Activated CD8-positive, alpha-beta T cell treated with anti-CD3 and anti-CD28 coated beads for 36 hours (primary cell): ENCODE measurements at regions of chrX and their contacts with region 1.

Region 1: DNA sequence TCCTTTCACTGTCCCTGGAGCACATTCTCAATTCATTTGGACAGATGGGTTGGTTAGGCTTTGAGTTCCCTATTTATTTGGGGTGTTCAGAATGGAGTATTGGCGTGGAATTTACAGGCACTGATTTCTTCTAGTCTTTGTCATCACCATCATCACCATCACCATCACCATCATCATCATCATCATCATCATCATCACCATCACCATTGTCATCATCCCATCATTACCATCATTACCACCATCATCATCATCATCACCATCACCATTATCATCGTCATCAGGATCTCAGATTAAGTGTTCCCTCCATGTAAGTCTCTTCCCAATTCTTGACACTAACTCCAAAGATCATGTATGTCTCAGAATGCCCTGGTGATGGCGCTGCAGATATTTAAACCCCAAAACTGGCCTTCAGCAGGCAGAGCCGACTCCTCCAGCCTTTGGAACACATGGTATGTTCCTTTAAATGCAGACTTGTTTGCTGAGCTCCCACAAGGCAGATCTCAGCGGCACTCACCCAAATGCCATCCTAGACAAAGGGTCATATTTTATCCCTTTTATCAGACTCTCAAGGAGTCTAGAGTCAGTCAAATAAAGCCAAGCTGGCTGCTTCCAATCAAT is 19.8 kb upstream of the FAM9A start:
- DNase-seq: peak; percentile 9
- ATAC-seq: no peak
- H3K4me3 Mint-ChIP-seq: no peak overlapping the region
- H3K27ac Mint-ChIP-seq: no peak overlapping the region
- H3K4me1 Mint-ChIP-seq: no peaks in the 10 kb centered on the region
- H3K27me3 Mint-ChIP-seq: peaks cover 2% of the 10 kb centered on the region
- CTCF ChIP-seq: no peak

Region 2: DNA sequence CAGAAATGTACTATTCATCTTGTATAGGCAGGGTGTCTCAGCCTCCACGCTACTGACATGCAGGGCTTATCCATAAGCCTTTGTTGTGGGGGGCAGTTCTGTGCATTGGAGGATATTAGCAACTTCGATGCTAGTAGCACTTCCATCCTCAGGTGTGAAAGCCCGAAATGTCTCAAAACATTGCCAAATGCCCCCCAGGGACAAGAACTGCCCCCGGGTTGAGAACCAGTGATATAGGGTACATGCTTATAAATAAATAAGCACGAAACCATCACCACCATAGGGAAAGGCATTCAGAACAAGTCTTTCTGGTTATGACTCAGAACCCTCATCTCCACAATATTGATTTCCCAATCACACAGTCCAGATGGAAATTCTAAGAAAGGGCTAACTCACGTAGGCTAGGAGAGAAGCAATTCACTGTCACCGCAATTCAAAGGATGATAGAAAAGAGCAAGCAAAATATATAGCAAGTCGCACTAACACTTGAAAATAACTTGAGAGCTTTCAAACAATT is 173.9 kb before region 1 on chrX:
- CTCF ChIA-PET with region 1: no interaction called
- POLR2A ChIA-PET with region 1: no interaction called
- intact Hi-C with region 1: no loop called
- DNase-seq: no peak
- ATAC-seq: no peak
- H3K4me3 Mint-ChIP-seq: no peak overlapping the region
- H3K27ac Mint-ChIP-seq: no peak overlapping the region
- H3K4me1 Mint-ChIP-seq: no peaks in the 10 kb centered on the region
- H3K27me3 Mint-ChIP-seq: no peaks in the 10 kb centered on the region
- CTCF ChIP-seq: no peak

Region 3: DNA sequence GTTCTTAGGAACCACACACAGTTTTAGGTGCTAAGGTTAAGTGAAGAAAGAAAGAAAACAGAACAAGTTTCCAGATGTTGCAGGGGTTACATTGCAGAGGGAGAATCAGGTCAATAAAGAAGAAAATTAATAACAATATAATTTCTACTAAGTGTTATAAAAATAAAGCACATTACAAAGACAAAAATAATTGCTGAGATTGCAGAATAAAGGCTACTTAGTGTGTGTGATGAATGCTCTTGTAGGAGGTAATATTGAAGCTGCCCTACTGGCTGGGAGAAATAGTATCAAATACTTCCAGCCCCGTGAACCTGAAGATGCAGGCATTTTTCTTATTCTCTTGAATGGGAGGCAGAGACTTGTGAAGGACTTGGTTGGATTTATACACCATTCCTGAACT is 13.4 kb after region 1 on chrX:
- CTCF ChIA-PET with region 1: no interaction called
- POLR2A ChIA-PET with region 1: no interaction called
- intact Hi-C with region 1: no loop called
- DNase-seq: no peak
- ATAC-seq: no peak
- H3K4me3 Mint-ChIP-seq: no peak overlapping the region
- H3K27ac Mint-ChIP-seq: no peak overlapping the region
- H3K4me1 Mint-ChIP-seq: no peaks in the 10 kb centered on the region
- H3K27me3 Mint-ChIP-seq: peaks cover 11% of the 10 kb centered on the region
- CTCF ChIP-seq: no peak

Region 4: GRCh38 chrX:9708904-9709553 is 888.0 kb after region 1 on chrX:
- CTCF ChIA-PET with region 1: no interaction called
- POLR2A ChIA-PET with region 1: no interaction called
- intact Hi-C with region 1: loop called (anchors 10 kb)
- DNase-seq: peak; percentile 81
- ATAC-seq: peak; percentile 75
- H3K4me3 Mint-ChIP-seq: no peak overlapping the region
- H3K27ac Mint-ChIP-seq: no peak overlapping the region
- H3K4me1 Mint-ChIP-seq: peaks cover 5% of the 10 kb centered on the region
- H3K27me3 Mint-ChIP-seq: no peaks in the 10 kb centered on the region
- CTCF ChIP-seq: peak; percentile 57